B cell (primary cell): ENCODE measurements at regions of chr20 and their contacts with region 1.

Region 1: DNA sequence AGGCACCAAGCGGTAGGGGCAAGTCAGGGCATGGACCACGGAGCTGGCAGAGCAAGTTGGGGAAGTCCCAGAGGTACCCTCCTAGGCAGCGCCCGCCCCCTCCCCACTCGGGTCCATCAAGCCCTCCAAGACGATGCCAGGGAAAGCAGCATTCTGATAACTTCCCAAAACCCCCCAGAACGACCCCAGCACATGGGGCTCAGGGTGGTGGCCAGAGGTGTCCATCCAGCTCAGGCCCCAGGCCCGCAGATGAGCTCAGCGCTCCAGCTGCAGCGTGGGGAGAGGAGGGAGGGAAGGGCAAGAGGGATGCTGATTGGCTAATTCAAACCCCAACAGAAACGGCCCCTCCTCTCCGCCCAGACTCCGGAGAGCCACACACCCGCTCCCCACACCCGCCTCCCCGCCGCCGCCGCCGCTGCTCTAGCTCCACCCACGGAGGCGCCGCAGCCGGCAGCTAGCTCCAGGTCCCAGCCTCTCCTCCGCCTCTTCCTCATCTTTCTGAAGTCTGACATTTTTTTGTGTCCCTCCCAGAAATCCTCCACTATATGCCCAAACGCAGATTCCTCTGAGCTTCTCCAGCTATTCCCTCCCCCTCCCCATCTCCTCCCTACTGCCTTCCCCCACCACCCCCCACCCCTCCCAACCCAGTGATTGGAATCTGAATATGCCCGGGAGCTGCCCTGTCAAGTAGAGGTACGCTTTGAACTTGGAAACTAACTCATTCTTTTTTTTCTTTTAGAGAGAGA is 40.3 kb upstream of the TLDC2 start:
- DNase-seq: peak; percentile 88
- ATAC-seq: peak; percentile 93
- H3K4me3 ChIP-seq: peak overlapping the region in 4 of 5 experiments; percentile 44 to 58 (median 48)
- H3K4me3 Mint-ChIP-seq: peak overlapping the region; percentile 86
- H3K27ac ChIP-seq: peak overlapping the region; percentile 10 to 21
- H3K27ac Mint-ChIP-seq: peak overlapping the region; percentile 81
- H3K4me1 ChIP-seq: peaks cover 28 to 45% of the 10 kb centered on the region in 2 donors
- H3K4me1 Mint-ChIP-seq: peaks cover 38% of the 10 kb centered on the region
- H3K27me3 ChIP-seq: no peaks in the 10 kb centered on the region
- H3K27me3 Mint-ChIP-seq: no peaks in the 10 kb centered on the region
- CTCF ChIP-seq: no peak

Region 2: DNA sequence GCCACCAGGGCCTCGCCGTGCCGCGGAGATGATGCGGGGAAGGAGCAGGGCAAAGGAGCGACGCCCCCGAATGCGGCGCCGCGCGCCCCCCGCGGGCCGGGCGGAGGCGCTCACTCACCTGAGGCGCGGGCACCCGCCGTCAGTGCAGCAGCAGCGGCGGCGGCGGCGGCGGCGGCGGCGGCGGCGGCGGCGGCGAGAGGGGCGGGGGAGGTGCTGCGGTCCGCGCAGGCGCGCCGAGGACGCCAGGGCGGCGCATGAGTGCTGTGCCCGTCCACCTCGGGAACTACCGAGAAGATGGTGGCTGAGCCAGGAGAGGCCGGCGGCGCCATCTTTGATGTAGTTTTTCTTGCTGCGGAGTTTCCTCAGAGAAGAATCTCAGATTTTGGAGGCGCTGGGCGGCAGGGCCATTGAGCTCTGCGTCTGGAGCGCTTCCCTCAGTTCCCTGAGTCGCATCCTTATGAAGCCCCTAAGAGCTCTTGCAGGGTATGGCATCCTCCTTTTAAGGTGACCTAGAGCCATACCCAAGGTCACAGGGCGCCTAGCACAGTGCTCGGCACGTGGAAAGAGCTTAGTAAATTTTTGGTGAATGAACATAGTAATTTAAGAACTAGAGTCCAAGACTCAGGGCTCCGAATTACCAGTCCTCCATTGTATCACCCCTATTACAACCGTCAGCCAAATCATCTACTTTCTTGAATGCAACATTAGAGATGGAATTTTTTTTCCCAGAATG is 89.5 kb before region 1 on chr20 and contains the start of gene NDRG3:
- CTCF ChIA-PET with region 1: no interaction called
- POLR2A ChIA-PET with region 1: interaction called, 10 read pairs
- intact Hi-C with region 1: no loop called
- DNase-seq: peak; percentile 96
- ATAC-seq: peak; percentile 97
- H3K4me3 ChIP-seq: peak within 1 kb of the TSS; percentile 55 to 87 (median 74)
- H3K4me3 Mint-ChIP-seq: peak within 1 kb of the TSS; percentile 91
- H3K27ac ChIP-seq: peak within 1 kb of the TSS; percentile 50 to 79
- H3K27ac Mint-ChIP-seq: peak within 1 kb of the TSS; percentile 93
- H3K4me1 ChIP-seq: peaks cover 12 to 13% of the 10 kb centered on the region in 2 donors
- H3K4me1 Mint-ChIP-seq: peaks cover 21% of the 10 kb centered on the region
- H3K27me3 ChIP-seq: no peaks in the 10 kb centered on the region
- H3K27me3 Mint-ChIP-seq: no peaks in the 10 kb centered on the region
- CTCF ChIP-seq: peak; percentile 26
- total RNA-seq, gene NDRG3: 26.1 and 27.5 TPM in 2 replicates

Region 3: DNA sequence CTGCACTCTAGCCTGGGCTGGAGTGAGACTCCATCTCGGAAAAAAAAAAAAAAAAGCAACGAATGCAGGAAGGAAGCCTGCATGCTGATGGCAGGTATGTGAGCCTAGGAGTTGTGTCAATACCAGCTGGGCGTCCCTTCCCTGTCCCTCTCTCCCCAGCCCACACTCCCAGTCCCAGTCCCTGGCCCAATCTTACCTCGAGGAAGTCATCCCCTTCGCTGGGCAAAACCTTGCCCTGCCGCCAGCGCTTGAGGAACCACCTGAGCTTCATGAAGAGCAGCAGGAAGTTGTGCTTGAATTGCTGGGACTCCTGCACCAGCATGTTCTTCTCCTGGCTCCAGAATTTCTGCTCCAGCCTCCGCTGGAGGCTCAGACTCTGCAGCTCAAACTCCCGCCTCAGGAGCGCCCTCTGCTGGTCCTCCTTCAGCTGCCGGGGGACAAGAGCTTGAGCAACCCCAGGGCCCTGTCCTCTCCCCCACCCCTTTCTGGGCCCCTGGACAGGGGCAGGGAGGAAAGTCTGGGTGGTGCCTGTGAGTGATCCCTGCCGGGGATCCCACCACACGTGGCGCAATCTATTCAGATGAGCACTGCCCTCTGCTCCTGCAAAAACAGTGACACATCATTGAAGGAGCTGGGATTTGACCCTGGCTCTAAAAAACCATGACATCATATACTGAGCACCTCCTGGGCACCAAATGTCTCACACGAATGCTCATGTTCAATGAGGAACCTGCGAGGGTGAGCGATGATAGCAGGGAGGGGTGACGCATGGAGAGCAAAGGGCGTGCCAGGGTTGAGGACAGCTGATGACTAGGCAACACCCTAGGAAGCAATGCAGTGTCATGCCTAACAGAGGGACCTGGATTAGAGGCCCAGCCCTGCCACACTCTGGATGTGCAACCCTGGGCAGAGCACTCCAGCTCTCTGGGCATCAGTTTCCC is 27.0 kb before region 1 on chr20:
- CTCF ChIA-PET with region 1: interaction called, 13 read pairs
- POLR2A ChIA-PET with region 1: no interaction called
- intact Hi-C with region 1: no loop called
- DNase-seq: peak; percentile 78
- ATAC-seq: peak; percentile 71
- H3K4me3 ChIP-seq: no peak overlapping the region
- H3K4me3 Mint-ChIP-seq: no peak overlapping the region
- H3K27ac ChIP-seq: no peak overlapping the region
- H3K27ac Mint-ChIP-seq: peak overlapping the region; percentile 50
- H3K4me1 ChIP-seq: peaks cover 0 to 9% of the 10 kb centered on the region in 2 donors
- H3K4me1 Mint-ChIP-seq: peaks cover 3% of the 10 kb centered on the region
- H3K27me3 ChIP-seq: no peaks in the 10 kb centered on the region
- H3K27me3 Mint-ChIP-seq: no peaks in the 10 kb centered on the region
- CTCF ChIP-seq: peak; percentile 83

Region 4: DNA sequence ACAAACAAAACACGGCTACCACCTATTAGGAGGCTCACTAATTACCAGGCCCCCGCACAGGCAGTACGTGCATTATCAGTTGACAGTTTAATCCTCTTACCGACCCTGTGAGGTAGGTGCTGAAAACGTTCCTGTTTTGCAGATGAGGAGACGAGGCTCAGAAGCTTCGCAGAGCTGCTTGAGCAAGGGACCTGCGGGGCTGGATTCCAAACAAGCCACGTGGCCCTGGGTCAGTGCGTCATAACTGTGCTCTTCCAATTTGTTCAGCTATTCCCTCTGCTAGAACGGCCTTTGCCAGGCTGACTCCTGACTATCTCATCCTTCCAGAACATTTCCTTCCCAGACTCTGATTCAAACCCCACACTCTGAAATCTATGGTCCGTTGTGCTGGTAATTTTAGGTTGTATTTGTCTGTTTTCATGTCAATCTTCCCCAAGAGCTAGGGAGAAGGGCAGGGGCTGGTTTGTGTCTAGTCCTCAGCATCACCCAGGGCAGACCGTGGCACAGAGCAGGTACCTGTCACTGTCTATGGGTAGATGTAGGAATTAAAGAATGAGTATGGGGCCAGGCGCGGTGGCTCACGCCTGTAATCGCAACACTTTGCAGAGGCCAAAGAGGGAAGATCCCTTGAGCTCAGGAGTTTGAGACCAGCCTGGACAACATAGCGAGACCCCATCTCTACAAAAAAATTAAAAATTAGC is 11.5 kb after region 1 on chr20:
- CTCF ChIA-PET with region 1: interaction called, 22 read pairs
- POLR2A ChIA-PET with region 1: interaction called, 8 read pairs
- intact Hi-C with region 1: loop called (anchors 1 kb)
- DNase-seq: no peak
- ATAC-seq: no peak
- H3K4me3 ChIP-seq: no peak overlapping the region
- H3K4me3 Mint-ChIP-seq: peak overlapping the region; percentile 11
- H3K27ac ChIP-seq: peak overlapping the region; percentile 97 to 98
- H3K27ac Mint-ChIP-seq: peak overlapping the region; percentile 96
- H3K4me1 ChIP-seq: peaks cover 82 to 95% of the 10 kb centered on the region in 2 donors
- H3K4me1 Mint-ChIP-seq: peaks cover 80% of the 10 kb centered on the region
- H3K27me3 ChIP-seq: no peaks in the 10 kb centered on the region
- H3K27me3 Mint-ChIP-seq: no peaks in the 10 kb centered on the region
- CTCF ChIP-seq: no peak

Region 5: GRCh38 chr20:36919715-36920333 is 84.2 kb after region 1 on chr20:
- CTCF ChIA-PET with region 1: no interaction called
- POLR2A ChIA-PET with region 1: no interaction called
- intact Hi-C with region 1: no loop called
- DNase-seq: peak; percentile 69
- ATAC-seq: no peak
- H3K4me3 ChIP-seq: no peak overlapping the region
- H3K4me3 Mint-ChIP-seq: no peak overlapping the region
- H3K27ac ChIP-seq: no peak overlapping the region
- H3K27ac Mint-ChIP-seq: no peak overlapping the region
- H3K4me1 ChIP-seq: no peaks in the 10 kb centered on the region
- H3K4me1 Mint-ChIP-seq: peaks cover 1% of the 10 kb centered on the region
- H3K27me3 ChIP-seq: no peaks in the 10 kb centered on the region
- H3K27me3 Mint-ChIP-seq: no peaks in the 10 kb centered on the region
- CTCF ChIP-seq: peak; percentile 96